ENCODE measurements at regions of chr2 and their contacts with region 1.

Region 1: DNA sequence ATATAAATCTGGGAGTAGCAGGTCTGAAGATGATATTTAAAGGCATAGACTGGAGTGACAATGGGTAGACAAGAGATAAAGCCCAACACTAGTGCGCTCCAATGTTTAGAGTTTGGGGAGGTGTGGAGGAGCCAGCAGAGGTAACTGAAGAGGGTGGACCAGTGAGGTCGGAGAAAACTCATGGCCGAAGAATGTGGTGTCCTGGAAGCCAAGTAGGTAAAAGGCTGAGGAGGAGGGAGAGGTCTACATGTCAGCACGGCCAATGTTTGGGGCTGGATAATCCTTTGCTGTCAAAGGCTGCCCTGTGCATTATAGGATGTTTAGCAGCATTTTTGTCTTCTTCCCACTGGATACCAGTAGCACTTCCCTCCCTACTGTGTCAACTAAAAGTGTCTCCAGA is 78.8 kb upstream of the KCNE4 start:
- DNase-seq: no peak
- ATAC-seq: no peak
- H3K4me3 ChIP-seq: no peak overlapping the region
- H3K4me3 Mint-ChIP-seq: no peak overlapping the region
- H3K27ac ChIP-seq: no peak overlapping the region
- H3K27ac Mint-ChIP-seq: no peak overlapping the region
- H3K4me1 ChIP-seq: peaks cover 5% of the 10 kb centered on the region
- H3K4me1 Mint-ChIP-seq: no peaks in the 10 kb centered on the region
- H3K27me3 ChIP-seq: peaks cover 0 to 5% of the 10 kb centered on the region in 2 experiments
- H3K27me3 Mint-ChIP-seq: peaks cover 13% of the 10 kb centered on the region
- CTCF ChIP-seq: no peak

Region 2: DNA sequence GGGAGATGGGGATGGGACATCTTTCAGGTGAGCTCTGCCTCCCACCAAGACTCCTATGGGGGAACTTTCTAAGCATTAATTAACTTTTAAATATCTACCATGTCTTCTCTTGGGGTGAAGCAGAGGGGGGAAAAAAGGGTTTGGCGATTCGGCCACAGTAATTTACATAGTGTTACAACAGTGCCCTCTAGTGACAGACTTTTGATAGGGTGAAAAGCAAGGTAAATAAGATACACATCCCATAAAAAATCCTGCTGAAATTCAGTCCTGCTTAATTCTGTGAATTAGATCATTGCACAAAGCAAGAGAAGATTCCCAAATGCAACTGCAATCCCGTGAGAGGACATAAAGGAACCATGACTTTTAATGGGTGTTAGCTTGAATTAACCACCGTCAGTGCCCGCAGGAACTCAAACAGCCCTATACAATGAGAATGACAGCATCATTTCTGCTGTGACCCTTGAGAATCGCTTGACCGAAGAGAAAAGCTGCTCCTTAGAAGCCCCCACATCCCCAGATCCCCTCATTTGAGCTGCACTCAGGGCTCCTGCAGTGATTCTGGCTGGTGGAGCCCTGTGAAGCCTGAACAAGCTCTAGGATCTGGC is 1395.9 kb after region 1 on chr2:
- CTCF ChIA-PET with region 1: no interaction called
- POLR2A ChIA-PET with region 1: no interaction called
- intact Hi-C with region 1: loop called in 1 of 2 experiments (anchors 5 kb)
- DNase-seq: peak in 4 of 14 experiments; percentile 19 to 64 (median 46)
- ATAC-seq: no peak
- H3K4me3 ChIP-seq: no peak overlapping the region
- H3K4me3 Mint-ChIP-seq: no peak overlapping the region
- H3K27ac ChIP-seq: no peak overlapping the region
- H3K27ac Mint-ChIP-seq: no peak overlapping the region
- H3K4me1 ChIP-seq: peaks cover 4% of the 10 kb centered on the region
- H3K4me1 Mint-ChIP-seq: no peaks in the 10 kb centered on the region
- H3K27me3 ChIP-seq: no peaks in the 10 kb centered on the region
- H3K27me3 Mint-ChIP-seq: no peaks in the 10 kb centered on the region
- CTCF ChIP-seq: peak; percentile 75

Measured in CD4-positive, alpha-beta T cell (primary cell).